Tibial artery (tissue), 4 donors: ENCODE measurements at regions of chr1 and their contacts with region 1.

Region 1: GRCh38 chr1:9110669-9111356 is 18.1 kb downstream of the GPR157 start:
- DNase-seq: peak; percentile 88 to 91
- H3K4me3 ChIP-seq: no peak overlapping the region
- H3K27ac ChIP-seq: no peak overlapping the region
- H3K4me1 ChIP-seq: peaks cover 0 to 6% (median 0%) of the 10 kb centered on the region in 4 donors
- H3K27me3 ChIP-seq: no peaks in the 10 kb centered on the region
- CTCF ChIP-seq: peak; percentile 86 to 89

Region 2: GRCh38 chr1:8848663-8849386 is 262.0 kb before region 1 on chr1:
- intact Hi-C with region 1: no loop called
- DNase-seq: peak; percentile 90 to 96
- H3K4me3 ChIP-seq: no peak overlapping the region
- H3K27ac ChIP-seq: peak overlapping the region; percentile 26 to 51
- H3K4me1 ChIP-seq: peaks cover 0 to 31% (median 21%) of the 10 kb centered on the region in 4 donors
- H3K27me3 ChIP-seq: no peaks in the 10 kb centered on the region
- CTCF ChIP-seq: peak; percentile 84

Region 3: GRCh38 chr1:8873506-8874229 is 237.1 kb before region 1 on chr1:
- intact Hi-C with region 1: no loop called
- DNase-seq: peak; percentile 90 to 95
- H3K4me3 ChIP-seq: peak overlapping the region in 1 of 2 donors; percentile 0
- H3K27ac ChIP-seq: peak overlapping the region; percentile 67 to 97
- H3K4me1 ChIP-seq: peaks cover 0 to 65% (median 54%) of the 10 kb centered on the region in 4 donors
- H3K27me3 ChIP-seq: no peaks in the 10 kb centered on the region
- CTCF ChIP-seq: no peak

Region 4: DNA sequence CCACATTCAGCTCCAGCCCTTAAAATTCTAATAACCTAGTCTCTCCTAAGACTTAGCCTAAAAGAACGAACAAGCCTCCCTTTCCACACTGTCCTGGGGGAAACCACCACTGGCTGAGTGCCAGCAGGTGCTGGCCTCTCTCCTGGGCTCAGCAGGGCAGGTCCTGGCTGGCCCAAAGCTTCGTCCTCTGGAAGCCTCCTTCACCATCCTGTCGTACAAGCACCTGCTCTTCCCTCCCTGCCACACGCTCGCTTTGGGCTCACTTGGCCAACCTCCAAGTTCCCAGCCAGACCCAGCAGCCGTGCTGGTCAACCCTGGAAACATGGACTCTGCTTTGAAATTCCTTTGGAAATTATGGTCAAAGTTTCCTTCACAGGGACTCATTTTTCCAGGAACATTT is 370.2 kb after region 1 on chr1:
- intact Hi-C with region 1: loop called (anchors 5 kb)
- DNase-seq: no peak
- H3K4me3 ChIP-seq: no peak overlapping the region
- H3K27ac ChIP-seq: no peak overlapping the region
- H3K4me1 ChIP-seq: no peaks in the 10 kb centered on the region
- H3K27me3 ChIP-seq: no peaks in the 10 kb centered on the region
- CTCF ChIP-seq: no peak